B cell (primary cell): ENCODE measurements at regions of chr12 and their contacts with region 1.

Region 1: DNA sequence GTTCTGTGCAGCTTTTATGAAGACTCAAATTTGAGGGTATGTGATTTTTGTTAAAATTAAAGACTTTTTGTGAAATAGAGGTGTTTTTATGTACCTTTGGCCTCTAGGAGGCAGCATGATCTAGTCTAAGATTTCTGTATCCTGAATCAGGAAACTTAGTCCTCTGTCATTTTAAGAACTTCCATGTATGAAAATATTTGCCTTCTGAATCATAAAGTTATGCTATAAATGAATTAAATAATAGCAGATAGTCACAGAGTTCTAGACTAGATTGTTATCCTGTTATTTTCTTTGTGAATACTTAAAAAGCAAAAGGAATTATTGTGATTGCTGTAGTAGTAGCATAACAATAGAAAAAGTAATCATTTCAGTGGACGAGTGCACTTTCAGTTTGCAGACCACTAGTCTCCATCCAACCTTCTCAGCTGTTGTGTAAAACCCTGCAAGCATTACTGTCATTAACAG is 56.3 kb downstream of the FGD4 start:
- DNase-seq: peak; percentile 74
- ATAC-seq: peak; percentile 45
- H3K4me3 ChIP-seq: peak overlapping the region in 3 of 5 experiments; percentile 21 to 42 (median 31)
- H3K4me3 Mint-ChIP-seq: peak overlapping the region; percentile 34
- H3K27ac ChIP-seq: peak overlapping the region in 1 of 2 donors; percentile 38
- H3K27ac Mint-ChIP-seq: no peak overlapping the region
- H3K4me1 ChIP-seq: peaks cover 0 to 4% of the 10 kb centered on the region in 2 donors
- H3K4me1 Mint-ChIP-seq: peaks cover 15% of the 10 kb centered on the region
- H3K27me3 ChIP-seq: no peaks in the 10 kb centered on the region
- H3K27me3 Mint-ChIP-seq: no peaks in the 10 kb centered on the region
- CTCF ChIP-seq: peak; percentile 84

Region 2: DNA sequence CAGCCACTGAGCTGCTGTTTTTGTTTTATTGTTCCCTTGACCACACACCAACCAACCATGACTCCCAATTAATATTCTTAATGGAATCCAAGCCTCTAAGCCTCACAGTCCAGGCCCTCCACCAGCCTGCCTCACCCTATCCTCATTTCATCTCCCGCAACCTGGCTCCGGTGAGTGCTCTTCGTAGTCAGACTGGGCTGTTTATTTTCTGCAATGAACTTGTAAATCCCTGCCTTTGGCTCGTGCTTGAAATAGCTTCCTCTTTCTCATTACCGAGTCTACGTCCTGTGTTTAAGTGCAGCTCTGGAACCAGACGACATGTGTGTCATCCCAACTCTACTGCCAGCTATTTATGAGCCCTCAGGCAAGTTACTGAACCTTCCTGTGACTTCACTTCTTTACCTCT is 808.5 kb before region 1 on chr12:
- CTCF ChIA-PET with region 1: no interaction called
- POLR2A ChIA-PET with region 1: no interaction called
- intact Hi-C with region 1: loop called (anchors 5 kb)
- DNase-seq: peak; percentile 44
- ATAC-seq: peak; percentile 28
- H3K4me3 ChIP-seq: no peak overlapping the region
- H3K4me3 Mint-ChIP-seq: peak overlapping the region; percentile 24
- H3K27ac ChIP-seq: no peak overlapping the region
- H3K27ac Mint-ChIP-seq: peak overlapping the region; percentile 38
- H3K4me1 ChIP-seq: peaks cover 21 to 22% of the 10 kb centered on the region in 2 donors
- H3K4me1 Mint-ChIP-seq: peaks cover 29% of the 10 kb centered on the region
- H3K27me3 ChIP-seq: no peaks in the 10 kb centered on the region
- H3K27me3 Mint-ChIP-seq: no peaks in the 10 kb centered on the region
- CTCF ChIP-seq: no peak

Region 3: DNA sequence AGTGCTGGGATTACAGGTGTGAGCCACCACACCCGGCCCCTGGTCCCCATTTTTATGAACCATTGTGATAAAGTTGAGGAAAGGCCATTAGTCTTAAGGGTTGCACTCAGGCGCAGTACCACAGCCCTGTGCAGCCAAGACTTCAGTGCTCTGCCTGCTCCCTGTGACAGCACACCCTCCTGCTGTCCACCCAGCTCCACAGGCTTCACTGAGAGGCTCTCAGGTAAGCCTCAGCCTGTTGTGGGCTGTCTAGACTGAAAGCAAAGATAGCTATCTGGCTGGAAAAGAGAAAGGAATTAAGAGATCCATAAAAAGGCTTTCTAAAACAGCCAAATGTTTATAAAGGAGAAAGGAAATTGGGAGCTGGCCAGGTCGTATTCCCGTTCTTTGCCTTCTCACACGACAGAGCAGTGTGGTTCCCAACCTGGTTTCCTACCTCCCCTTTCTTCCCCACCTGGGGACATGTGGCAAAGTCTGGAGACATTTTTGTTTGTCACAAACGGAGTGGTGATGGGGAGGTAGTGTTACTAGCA is 204.3 kb after region 1 on chr12:
- CTCF ChIA-PET with region 1: interaction called, 32 read pairs
- POLR2A ChIA-PET with region 1: no interaction called
- intact Hi-C with region 1: loop called (anchors 1 kb)
- DNase-seq: no peak
- ATAC-seq: no peak
- H3K4me3 ChIP-seq: no peak overlapping the region
- H3K4me3 Mint-ChIP-seq: no peak overlapping the region
- H3K27ac ChIP-seq: no peak overlapping the region
- H3K27ac Mint-ChIP-seq: no peak overlapping the region
- H3K4me1 ChIP-seq: no peaks in the 10 kb centered on the region
- H3K4me1 Mint-ChIP-seq: peaks cover 3% of the 10 kb centered on the region
- H3K27me3 ChIP-seq: no peaks in the 10 kb centered on the region
- H3K27me3 Mint-ChIP-seq: no peaks in the 10 kb centered on the region
- CTCF ChIP-seq: no peak

Region 4: DNA sequence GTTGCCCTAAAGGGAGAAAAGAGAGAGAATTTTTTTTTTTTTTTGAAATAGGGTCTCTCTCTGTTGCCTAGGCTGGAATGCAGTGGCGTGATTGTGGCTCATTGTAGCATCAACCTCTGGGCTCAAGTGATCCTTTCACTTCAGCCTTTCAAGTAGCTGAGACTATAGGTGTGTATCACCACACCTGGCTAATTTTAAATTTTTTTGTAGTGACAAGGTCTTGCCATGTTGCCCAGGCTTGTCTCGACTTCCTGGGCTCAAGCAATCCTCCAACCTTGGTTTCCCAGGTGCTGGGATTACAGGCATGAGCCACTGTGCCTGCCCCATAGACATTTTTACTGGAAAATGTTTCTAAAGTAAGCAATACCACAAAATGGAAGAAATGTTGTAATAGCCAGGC is 263.3 kb after region 1 on chr12:
- CTCF ChIA-PET with region 1: interaction called, 5 read pairs
- POLR2A ChIA-PET with region 1: no interaction called
- intact Hi-C with region 1: loop called (anchors 5 kb)
- DNase-seq: no peak
- ATAC-seq: no peak
- H3K4me3 ChIP-seq: no peak overlapping the region
- H3K4me3 Mint-ChIP-seq: no peak overlapping the region
- H3K27ac ChIP-seq: no peak overlapping the region
- H3K27ac Mint-ChIP-seq: no peak overlapping the region
- H3K4me1 ChIP-seq: no peaks in the 10 kb centered on the region
- H3K4me1 Mint-ChIP-seq: no peaks in the 10 kb centered on the region
- H3K27me3 ChIP-seq: no peaks in the 10 kb centered on the region
- H3K27me3 Mint-ChIP-seq: no peaks in the 10 kb centered on the region
- CTCF ChIP-seq: no peak

Region 5: GRCh38 chr12:33044447-33044846 is 588.8 kb after region 1 on chr12:
- CTCF ChIA-PET with region 1: no interaction called
- POLR2A ChIA-PET with region 1: no interaction called
- intact Hi-C with region 1: loop called (anchors 10 kb)
- DNase-seq: no peak
- ATAC-seq: no peak
- H3K4me3 ChIP-seq: no peak overlapping the region
- H3K4me3 Mint-ChIP-seq: no peak overlapping the region
- H3K27ac ChIP-seq: no peak overlapping the region
- H3K27ac Mint-ChIP-seq: no peak overlapping the region
- H3K4me1 ChIP-seq: no peaks in the 10 kb centered on the region
- H3K4me1 Mint-ChIP-seq: no peaks in the 10 kb centered on the region
- H3K27me3 ChIP-seq: no peaks in the 10 kb centered on the region
- H3K27me3 Mint-ChIP-seq: no peaks in the 10 kb centered on the region
- CTCF ChIP-seq: no peak